ENCODE measurements at regions of chr13 and their contacts with region 1.

Region 1: DNA sequence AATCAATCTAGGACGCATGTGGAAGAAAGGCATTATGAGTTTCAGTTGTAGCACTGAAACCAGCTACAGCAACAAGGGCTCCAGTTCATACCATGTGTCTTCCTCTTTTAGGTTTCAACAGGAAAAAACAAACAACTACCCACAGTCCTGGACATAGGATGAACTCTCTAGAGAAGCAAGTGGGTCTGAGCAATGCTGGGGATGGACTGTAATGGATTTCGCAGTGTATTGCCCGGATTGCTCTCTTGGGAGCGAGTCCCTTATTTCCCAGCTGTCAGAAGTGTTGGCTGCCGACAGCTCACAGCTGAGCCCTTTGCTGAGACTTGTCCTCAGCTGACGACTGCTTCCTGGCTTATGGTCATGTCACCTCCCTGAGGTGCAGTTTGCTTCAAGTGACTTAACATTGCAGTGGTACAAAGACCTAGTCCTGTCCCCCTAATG is 12.1 kb upstream of the MYCBP2 start:
- DNase-seq: no peak
- H3K4me3 ChIP-seq: no peak overlapping the region
- H3K27ac ChIP-seq: no peak overlapping the region
- H3K4me1 ChIP-seq: no peaks in the 10 kb centered on the region
- H3K27me3 ChIP-seq: no peaks in the 10 kb centered on the region
- CTCF ChIP-seq: no peak

Region 2: GRCh38 chr13:77425705-77426104 is 86.7 kb after region 1 on chr13:
- intact Hi-C with region 1: no loop called
- DNase-seq: no peak
- H3K4me3 ChIP-seq: no peak overlapping the region
- H3K27ac ChIP-seq: no peak overlapping the region
- H3K4me1 ChIP-seq: no peaks in the 10 kb centered on the region
- H3K27me3 ChIP-seq: no peaks in the 10 kb centered on the region
- CTCF ChIP-seq: no peak

Region 3: GRCh38 chr13:77477299-77477848 is 138.4 kb after region 1 on chr13:
- intact Hi-C with region 1: loop called (anchors 10 kb)
- DNase-seq: no peak
- H3K4me3 ChIP-seq: no peak overlapping the region
- H3K27ac ChIP-seq: no peak overlapping the region
- H3K4me1 ChIP-seq: no peaks in the 10 kb centered on the region
- H3K27me3 ChIP-seq: no peaks in the 10 kb centered on the region
- CTCF ChIP-seq: no peak